Panc1 (cell line): ENCODE measurements at regions of chr3 and their contacts with region 1.

Region 1: GRCh38 chr3:125045965-125046364 is 9.8 kb downstream of the HEG1 start:
- DNase-seq: no peak
- ATAC-seq: peak; percentile 62
- H3K4me3 ChIP-seq: no peak overlapping the region
- H3K27ac ChIP-seq: peak overlapping the region; percentile 39; the same call in 1 of the 2 replicates
- H3K4me1 ChIP-seq: peaks cover 65% of the 10 kb centered on the region
- H3K27me3 ChIP-seq: no peaks in the 10 kb centered on the region
- CTCF ChIP-seq: no peak

Region 2: GRCh38 chr3:125156456-125156855 is 110.5 kb after region 1 on chr3:
- CTCF ChIA-PET with region 1: no interaction called
- POLR2A ChIA-PET with region 1: interaction called, 10 read pairs
- in situ Hi-C with region 1: no loop called
- intact Hi-C with region 1: loop called (anchors 5 kb)
- DNase-seq: no peak
- ATAC-seq: no peak
- H3K4me3 ChIP-seq: no peak overlapping the region
- H3K27ac ChIP-seq: no peak overlapping the region
- H3K4me1 ChIP-seq: peaks cover 3% of the 10 kb centered on the region
- H3K27me3 ChIP-seq: no peaks in the 10 kb centered on the region
- CTCF ChIP-seq: no peak

Region 3: GRCh38 chr3:125622381-125622788 is 576.4 kb after region 1 on chr3:
- CTCF ChIA-PET with region 1: no interaction called
- POLR2A ChIA-PET with region 1: no interaction called
- in situ Hi-C with region 1: no loop called
- intact Hi-C with region 1: no loop called
- DNase-seq: no peak
- ATAC-seq: no peak
- H3K4me3 ChIP-seq: no peak overlapping the region
- H3K27ac ChIP-seq: no peak overlapping the region
- H3K4me1 ChIP-seq: no peaks in the 10 kb centered on the region
- H3K27me3 ChIP-seq: no peaks in the 10 kb centered on the region
- CTCF ChIP-seq: no peak